ENCODE measurements at regions of chr1 and their contacts with region 1.

Region 1: DNA sequence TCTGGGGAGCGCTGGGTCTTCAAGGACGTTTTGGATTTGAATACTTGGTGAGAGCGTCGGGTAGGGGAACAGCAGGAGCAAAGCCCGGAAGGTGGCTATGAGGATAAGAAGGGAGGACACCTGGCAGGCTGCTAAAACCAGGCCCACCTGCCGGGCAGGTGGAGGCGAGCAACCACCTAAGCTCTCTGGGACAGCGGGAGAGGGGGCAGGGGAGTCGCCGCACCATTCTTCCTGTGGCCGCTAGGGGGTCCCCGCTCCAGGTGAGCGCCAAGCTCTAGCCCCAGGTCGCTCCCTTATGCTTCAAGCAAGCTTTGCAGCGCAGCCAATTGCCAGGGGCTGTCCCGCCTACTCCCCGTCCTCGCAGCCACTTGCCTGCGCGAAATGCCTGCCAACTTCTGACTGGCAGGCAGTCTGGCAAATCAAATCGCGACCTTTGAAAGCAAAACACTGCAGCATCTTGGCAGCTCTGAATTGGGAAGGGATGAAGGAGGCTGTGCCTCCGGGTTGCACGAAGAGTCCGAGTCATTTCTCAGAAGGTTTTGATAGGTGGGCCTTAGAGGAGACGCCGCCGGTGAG is at the start of gene NIPAL3:
- DNase-seq: peak; percentile 96
- H3K4me3 ChIP-seq: peak within 1 kb of the TSS; percentile 87
- CTCF ChIP-seq: peak; percentile 91

Region 2: DNA sequence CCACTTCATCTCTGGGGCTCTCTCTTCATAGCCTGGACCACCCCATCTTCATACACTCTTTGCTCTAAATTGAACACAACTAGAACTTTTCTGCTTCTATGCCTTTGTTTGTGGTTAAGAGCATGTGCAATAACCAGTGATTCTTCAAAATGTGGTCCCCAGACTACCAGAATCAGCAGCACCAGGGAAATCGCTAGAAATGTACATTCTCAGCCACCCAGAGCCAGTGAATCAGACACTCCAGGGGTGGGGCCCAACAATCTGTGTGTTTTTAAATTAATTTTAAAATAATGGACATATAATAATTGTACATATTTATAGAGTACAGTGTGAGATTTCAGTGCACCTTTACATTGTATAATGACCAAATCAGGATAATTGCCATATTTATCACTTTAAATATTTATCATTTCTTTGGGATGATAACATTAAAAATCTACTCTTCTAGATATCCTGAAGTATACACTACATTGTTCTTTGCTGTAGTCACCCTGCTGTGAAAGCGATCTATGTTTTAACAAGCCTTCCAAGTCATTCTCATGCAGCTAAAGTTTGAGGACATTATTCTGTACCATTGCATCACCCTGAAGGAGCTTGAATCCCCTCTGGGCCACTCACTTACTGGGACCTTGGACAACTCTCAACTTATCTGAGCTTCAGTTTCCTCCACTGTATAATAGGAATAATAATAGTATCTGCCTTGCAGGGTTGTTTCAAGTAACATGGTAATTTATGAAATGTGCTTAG is 85.5 kb before region 1 on chr1:
- CTCF ChIA-PET with region 1: no interaction called
- POLR2A ChIA-PET with region 1: no interaction called
- DNase-seq: peak; percentile 40
- H3K4me3 ChIP-seq: no peak overlapping the region
- CTCF ChIP-seq: no peak

Region 3: GRCh38 chr1:24403806-24404205 is 11.6 kb before region 1 on chr1:
- CTCF ChIA-PET with region 1: interaction called, 42 read pairs
- POLR2A ChIA-PET with region 1: interaction called, 3 read pairs
- DNase-seq: no peak
- H3K4me3 ChIP-seq: no peak overlapping the region
- CTCF ChIP-seq: no peak

Region 4: GRCh38 chr1:24642481-24643361 is 227.3 kb after region 1 on chr1 and contains the start of gene SRRM1:
- CTCF ChIA-PET with region 1: interaction called, 13 read pairs
- POLR2A ChIA-PET with region 1: no interaction called
- DNase-seq: peak; percentile 99
- H3K4me3 ChIP-seq: peak within 1 kb of the TSS; percentile 95
- CTCF ChIP-seq: peak; percentile 34